Activated CD4-positive, alpha-beta T cell treated with anti-CD3 and anti-CD28 coated beads, Interleukin-2, amount 10 ng/mL, durations not matched to agents 24 days and 14 days (primary cell): ENCODE measurements at regions of chr1 and their contacts with region 1.

Region 1: GRCh38 chr1:12448746-12449177 is 169.2 kb downstream of the DHRS3 start:
- DNase-seq: no peak
- H3K4me3 Mint-ChIP-seq: peak overlapping the region; percentile 80
- H3K27ac Mint-ChIP-seq: peak overlapping the region; percentile 94
- H3K4me1 Mint-ChIP-seq: peaks cover 61% of the 10 kb centered on the region
- H3K27me3 Mint-ChIP-seq: peaks cover 4% of the 10 kb centered on the region

Region 2: GRCh38 chr1:12047120-12047876 is 401.5 kb before region 1 on chr1:
- intact Hi-C with region 1: loop called (anchors 5 kb)
- DNase-seq: peak; percentile 92
- H3K4me3 Mint-ChIP-seq: no peak overlapping the region
- H3K27ac Mint-ChIP-seq: no peak overlapping the region
- H3K4me1 Mint-ChIP-seq: peaks cover 24% of the 10 kb centered on the region
- H3K27me3 Mint-ChIP-seq: peaks cover 3% of the 10 kb centered on the region

Region 3: GRCh38 chr1:12244078-12244477 is 204.7 kb before region 1 on chr1:
- intact Hi-C with region 1: no loop called
- DNase-seq: peak; percentile 62
- H3K4me3 Mint-ChIP-seq: no peak overlapping the region
- H3K27ac Mint-ChIP-seq: no peak overlapping the region
- H3K4me1 Mint-ChIP-seq: no peaks in the 10 kb centered on the region
- H3K27me3 Mint-ChIP-seq: no peaks in the 10 kb centered on the region

Region 4: GRCh38 chr1:12344596-12345349 is 104.0 kb before region 1 on chr1:
- intact Hi-C with region 1: loop called (anchors 1 kb)
- DNase-seq: peak; percentile 67
- H3K4me3 Mint-ChIP-seq: peak overlapping the region; percentile 71
- H3K27ac Mint-ChIP-seq: peak overlapping the region; percentile 85
- H3K4me1 Mint-ChIP-seq: peaks cover 42% of the 10 kb centered on the region
- H3K27me3 Mint-ChIP-seq: no peaks in the 10 kb centered on the region

Region 5: DNA sequence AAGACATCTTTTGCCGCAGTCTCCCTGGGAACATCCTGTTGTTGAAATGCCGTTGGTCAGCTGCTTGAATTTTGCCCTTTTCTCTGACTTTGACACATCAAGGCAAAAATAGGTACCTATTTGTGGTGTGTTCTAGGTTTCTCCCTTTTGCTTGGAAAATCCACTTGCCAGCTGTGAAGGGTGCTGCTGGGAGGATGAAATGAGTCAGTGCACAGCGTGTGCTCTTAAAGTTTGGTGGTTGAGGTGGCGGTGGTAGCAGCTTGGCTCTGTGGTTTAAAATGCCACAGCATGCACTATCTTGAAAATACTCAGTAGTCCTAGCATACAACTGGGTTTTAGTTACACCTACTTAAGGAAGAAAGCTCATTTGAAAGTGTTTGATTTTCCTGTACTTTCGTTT is 14.6 kb before region 1 on chr1:
- intact Hi-C with region 1: loop called (anchors 1 kb)
- DNase-seq: peak; percentile 90
- H3K4me3 Mint-ChIP-seq: peak overlapping the region; percentile 23
- H3K27ac Mint-ChIP-seq: peak overlapping the region; percentile 85
- H3K4me1 Mint-ChIP-seq: peaks cover 64% of the 10 kb centered on the region
- H3K27me3 Mint-ChIP-seq: no peaks in the 10 kb centered on the region

Region 6: DNA sequence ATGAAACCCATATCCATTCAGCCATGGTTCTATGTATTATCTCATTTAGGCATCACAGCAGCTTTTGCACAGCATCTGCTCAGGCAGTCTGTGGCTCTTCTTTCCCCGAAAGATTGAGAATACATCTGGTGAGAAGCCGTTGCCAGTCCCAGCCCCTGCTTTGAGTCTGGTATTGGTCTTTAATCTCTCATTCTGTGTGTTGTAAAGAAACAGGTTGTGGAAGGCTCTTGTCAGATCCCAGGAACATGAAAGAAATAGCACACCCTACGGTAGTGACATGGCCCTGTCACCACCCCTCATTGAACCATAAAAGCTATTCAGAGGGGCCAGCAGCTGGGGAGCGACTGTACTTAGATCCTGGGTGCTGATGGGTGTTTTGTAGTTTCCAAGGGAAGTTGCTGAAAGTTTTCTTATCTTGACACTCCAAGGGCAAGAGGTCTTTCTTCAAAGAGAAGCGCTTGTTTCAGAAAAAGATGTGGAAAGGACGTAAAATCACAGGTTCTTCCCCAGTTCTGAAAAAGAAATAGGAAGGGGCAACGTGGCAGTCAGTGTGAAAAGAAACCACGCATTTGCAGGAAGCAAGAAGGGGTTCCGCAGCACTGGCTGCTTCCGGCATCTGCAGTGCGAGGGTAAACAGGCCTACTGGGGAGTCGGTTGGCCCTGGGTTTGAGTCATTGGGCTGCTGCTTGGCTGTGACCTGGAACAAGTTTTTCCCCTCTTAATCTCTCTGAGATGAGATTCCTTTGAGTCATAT is 24.2 kb after region 1 on chr1:
- intact Hi-C with region 1: loop called (anchors 1 kb)
- DNase-seq: peak; percentile 87
- H3K4me3 Mint-ChIP-seq: peak overlapping the region; percentile 77
- H3K27ac Mint-ChIP-seq: peak overlapping the region; percentile 94
- H3K4me1 Mint-ChIP-seq: peaks cover 71% of the 10 kb centered on the region
- H3K27me3 Mint-ChIP-seq: no peaks in the 10 kb centered on the region

Region 7: GRCh38 chr1:12501661-12502060 is 52.9 kb after region 1 on chr1:
- intact Hi-C with region 1: loop called (anchors 2 kb)
- DNase-seq: no peak
- H3K4me3 Mint-ChIP-seq: no peak overlapping the region
- H3K27ac Mint-ChIP-seq: no peak overlapping the region
- H3K4me1 Mint-ChIP-seq: peaks cover 20% of the 10 kb centered on the region
- H3K27me3 Mint-ChIP-seq: no peaks in the 10 kb centered on the region